Dorsolateral prefrontal cortex (tissue), 120 donors: ENCODE measurements at regions of chr11 and their contacts with region 1.

Region 1: DNA sequence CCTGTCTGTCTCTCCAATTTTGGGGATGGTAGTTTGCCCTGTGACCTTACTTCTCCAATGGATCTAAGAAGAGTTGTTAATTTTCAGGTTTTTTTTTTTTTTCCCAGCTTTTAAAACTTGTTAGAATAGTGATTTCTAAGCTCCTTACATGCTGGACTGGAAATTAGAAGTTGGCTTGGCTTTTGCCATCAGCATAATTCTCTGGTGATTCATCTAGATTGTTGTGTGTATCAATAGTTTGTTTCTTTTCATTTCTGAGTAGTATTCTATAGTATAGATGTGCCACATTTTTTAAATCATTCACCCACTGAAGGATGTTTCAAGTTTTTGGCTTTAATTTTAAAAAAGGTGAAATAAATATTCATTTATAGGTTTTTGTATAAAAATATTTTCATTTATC is 51.4 kb downstream of the ADAMTS15 start:
- DNase-seq: no peak
- H3K4me3 ChIP-seq: no peak overlapping the region
- H3K27ac ChIP-seq: no peak overlapping the region
- H3K27me3 ChIP-seq: peaks cover 0 to 9% (median 0%) of the 10 kb centered on the region in 45 donors
- CTCF ChIP-seq: no peak

Region 2: GRCh38 chr11:130442737-130443136 is 57.1 kb before region 1 on chr11:
- intact Hi-C with region 1: loop called in 1 of 2 experiments (anchors 2 kb)
- DNase-seq: no peak
- H3K4me3 ChIP-seq: no peak overlapping the region
- H3K27ac ChIP-seq: no peak overlapping the region
- H3K27me3 ChIP-seq: peaks cover 0 to 3% (median 0%) of the 10 kb centered on the region in 45 donors
- CTCF ChIP-seq: no peak

Region 3: GRCh38 chr11:130636722-130637517 is 137.1 kb after region 1 on chr11:
- intact Hi-C with region 1: no loop called
- DNase-seq: no peak
- H3K4me3 ChIP-seq: no peak overlapping the region
- H3K27ac ChIP-seq: no peak overlapping the region
- H3K27me3 ChIP-seq: peaks cover 0 to 6% (median 0%) of the 10 kb centered on the region in 45 donors
- CTCF ChIP-seq: no peak